OCI-LY7 (cell line): ENCODE measurements at regions of chr17 and their contacts with region 1.

Region 1: DNA sequence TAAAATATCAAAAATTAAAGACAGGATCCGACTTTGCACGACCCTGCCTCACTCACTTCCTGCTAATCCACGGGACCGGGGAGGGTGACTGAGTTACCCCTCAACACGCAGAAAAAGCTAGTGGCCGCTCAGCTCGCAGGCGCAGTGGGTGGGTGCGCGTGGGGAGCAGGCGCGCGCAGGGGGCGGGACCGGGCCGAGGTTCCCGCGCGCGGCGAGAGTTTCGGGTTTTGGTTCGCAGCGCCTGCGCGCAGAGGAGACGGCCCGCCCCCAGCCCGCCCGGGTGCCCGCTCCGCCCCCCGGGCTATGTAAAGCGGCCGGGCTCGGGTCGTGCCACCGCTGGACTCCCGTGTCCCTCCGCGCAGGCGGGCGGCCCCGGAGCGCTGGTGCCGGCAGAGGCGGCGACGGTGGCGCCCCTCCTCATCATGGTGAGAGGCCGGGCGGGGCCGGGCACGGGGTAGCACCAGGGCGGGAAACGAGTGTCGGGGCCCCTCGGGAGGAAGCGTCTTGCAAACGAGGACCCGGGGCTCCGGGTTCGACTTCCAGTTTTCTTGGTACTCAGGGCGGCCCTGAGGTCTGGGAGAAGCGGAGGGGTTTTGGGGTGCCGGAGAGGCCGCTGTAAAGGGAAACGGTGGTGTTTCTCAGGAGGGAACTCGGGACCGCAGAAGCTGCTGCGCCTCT is at the start of gene CNP:
- DNase-seq: peak; percentile 91
- H3K4me3 ChIP-seq: peak within 1 kb of the TSS; percentile 92
- H3K27ac ChIP-seq: peak within 1 kb of the TSS; percentile 62
- H3K4me1 ChIP-seq: peaks cover 33% of the 10 kb centered on the region
- CTCF ChIP-seq: no peak
- total RNA-seq, gene CNP: 33.8 and 34.1 TPM in 2 replicates

Region 2: GRCh38 chr17:41894791-41895331 is 71.7 kb before region 1 on chr17:
- CTCF ChIA-PET with region 1: no interaction called
- POLR2A ChIA-PET with region 1: no interaction called
- intact Hi-C with region 1: no loop called
- DNase-seq: no peak
- H3K4me3 ChIP-seq: no peak overlapping the region
- H3K27ac ChIP-seq: no peak overlapping the region
- H3K4me1 ChIP-seq: no peaks in the 10 kb centered on the region
- CTCF ChIP-seq: no peak

Region 3: DNA sequence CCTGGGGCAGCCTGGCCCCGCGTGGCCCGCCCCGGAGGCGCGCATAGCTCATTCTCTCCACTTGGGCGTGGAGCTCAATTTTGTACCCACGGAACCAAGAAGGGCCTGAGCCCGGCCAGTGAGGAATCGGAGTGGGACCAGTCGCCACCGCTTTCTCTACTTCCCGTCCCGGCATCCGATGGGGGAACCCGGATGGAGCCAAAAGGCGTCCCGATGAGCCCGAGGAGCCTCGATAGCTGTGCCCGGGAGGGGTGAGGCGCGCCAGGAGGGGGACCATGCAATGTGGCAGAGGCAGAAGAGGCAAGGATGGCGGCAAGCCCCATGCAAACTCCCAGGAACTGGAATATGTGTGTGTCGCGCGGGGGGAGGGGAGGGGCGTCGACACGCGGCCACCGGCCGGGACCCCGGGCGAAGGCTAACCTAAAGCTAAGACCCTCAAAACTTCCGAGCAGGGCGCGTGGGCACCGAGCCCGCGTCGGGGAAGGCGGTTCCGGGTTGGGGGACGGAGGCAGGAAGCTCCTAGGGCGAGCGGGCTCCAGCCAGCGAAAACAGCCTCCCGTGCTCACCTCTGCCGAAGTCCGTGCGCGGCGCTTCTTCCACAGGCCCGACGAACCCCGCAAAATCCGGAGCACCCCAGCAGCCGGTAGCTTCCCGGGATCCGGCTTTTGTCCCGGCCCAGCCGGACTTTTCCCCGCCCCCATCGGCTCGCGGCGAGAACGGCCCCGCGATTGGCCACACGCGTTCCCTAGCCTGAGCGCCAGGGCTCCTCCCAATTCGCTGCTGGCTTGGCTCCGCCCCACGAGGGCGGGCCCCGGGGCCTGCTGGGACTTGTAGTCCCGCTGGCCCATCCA is 48.1 kb before region 1 on chr17 and contains the start of gene ACLY:
- CTCF ChIA-PET with region 1: no interaction called
- POLR2A ChIA-PET with region 1: no interaction called
- intact Hi-C with region 1: loop called (anchors 5 kb)
- DNase-seq: peak; percentile 97
- H3K4me3 ChIP-seq: peak within 1 kb of the TSS; percentile 83
- H3K27ac ChIP-seq: peak within 1 kb of the TSS; percentile 59
- H3K4me1 ChIP-seq: peaks cover 37% of the 10 kb centered on the region
- CTCF ChIP-seq: no peak
- total RNA-seq, gene ACLY: 102 and 105 TPM in 2 replicates

Region 4: GRCh38 chr17:42067351-42068091 is 100.9 kb after region 1 on chr17:
- CTCF ChIA-PET with region 1: no interaction called
- POLR2A ChIA-PET with region 1: no interaction called
- intact Hi-C with region 1: loop called (anchors 1 kb)
- DNase-seq: peak; percentile 72
- H3K4me3 ChIP-seq: no peak overlapping the region
- H3K27ac ChIP-seq: no peak overlapping the region
- H3K4me1 ChIP-seq: peaks cover 23% of the 10 kb centered on the region
- CTCF ChIP-seq: peak; percentile 99

Region 5: DNA sequence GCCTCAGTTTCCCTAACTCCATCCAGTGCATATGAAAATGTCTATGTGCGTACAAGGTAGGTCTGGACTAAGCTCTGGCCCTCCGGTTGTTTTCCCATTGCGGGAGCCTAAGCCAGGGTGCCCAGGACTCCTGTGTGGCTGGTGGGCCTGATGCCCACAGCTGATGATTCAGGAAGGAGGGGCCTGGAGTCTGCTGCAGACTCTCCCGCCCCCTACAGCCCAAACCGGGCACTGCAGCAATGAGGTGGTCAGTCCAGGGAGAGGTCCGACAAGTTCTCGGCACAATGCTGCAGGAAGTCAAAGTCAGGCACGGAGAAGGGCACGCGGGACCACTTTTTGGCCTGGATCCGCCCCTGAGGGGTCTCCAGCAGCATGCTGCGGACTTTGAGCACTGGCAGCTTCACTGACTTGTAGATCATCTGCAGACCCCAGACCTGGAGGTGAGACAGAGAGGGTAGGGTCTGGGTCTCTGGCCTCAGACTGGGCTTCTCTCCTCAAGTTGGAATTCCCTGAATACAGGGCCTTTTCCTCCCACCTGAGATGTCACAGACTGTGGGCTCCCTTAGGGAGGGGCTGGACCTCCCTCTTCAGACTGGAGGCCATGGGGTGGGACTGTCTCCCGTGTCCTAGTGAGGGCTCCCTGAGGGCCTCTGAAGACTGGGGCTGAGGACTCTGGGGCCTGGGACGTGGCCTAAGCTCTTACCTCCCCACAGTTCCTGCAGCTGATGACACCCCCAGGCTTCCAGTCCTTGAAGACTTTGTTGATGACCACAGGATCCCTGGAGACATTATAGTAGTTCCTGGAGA is 135.1 kb after region 1 on chr17:
- CTCF ChIA-PET with region 1: interaction called, 3 read pairs
- POLR2A ChIA-PET with region 1: no interaction called
- intact Hi-C with region 1: loop called (anchors 2 kb)
- DNase-seq: peak; percentile 68
- H3K4me3 ChIP-seq: no peak overlapping the region
- H3K27ac ChIP-seq: no peak overlapping the region
- H3K4me1 ChIP-seq: peaks cover 14% of the 10 kb centered on the region
- CTCF ChIP-seq: peak; percentile 98

Region 6: GRCh38 chr17:43068570-43069367 is 1102.2 kb after region 1 on chr17:
- CTCF ChIA-PET with region 1: no interaction called
- POLR2A ChIA-PET with region 1: no interaction called
- intact Hi-C with region 1: no loop called
- DNase-seq: no peak
- H3K4me3 ChIP-seq: no peak overlapping the region
- H3K27ac ChIP-seq: no peak overlapping the region
- H3K4me1 ChIP-seq: no peaks in the 10 kb centered on the region
- CTCF ChIP-seq: no peak